Cardiac septum (tissue), 1 donor: ENCODE measurements at regions of chr21 and their contacts with region 1.

Region 1: DNA sequence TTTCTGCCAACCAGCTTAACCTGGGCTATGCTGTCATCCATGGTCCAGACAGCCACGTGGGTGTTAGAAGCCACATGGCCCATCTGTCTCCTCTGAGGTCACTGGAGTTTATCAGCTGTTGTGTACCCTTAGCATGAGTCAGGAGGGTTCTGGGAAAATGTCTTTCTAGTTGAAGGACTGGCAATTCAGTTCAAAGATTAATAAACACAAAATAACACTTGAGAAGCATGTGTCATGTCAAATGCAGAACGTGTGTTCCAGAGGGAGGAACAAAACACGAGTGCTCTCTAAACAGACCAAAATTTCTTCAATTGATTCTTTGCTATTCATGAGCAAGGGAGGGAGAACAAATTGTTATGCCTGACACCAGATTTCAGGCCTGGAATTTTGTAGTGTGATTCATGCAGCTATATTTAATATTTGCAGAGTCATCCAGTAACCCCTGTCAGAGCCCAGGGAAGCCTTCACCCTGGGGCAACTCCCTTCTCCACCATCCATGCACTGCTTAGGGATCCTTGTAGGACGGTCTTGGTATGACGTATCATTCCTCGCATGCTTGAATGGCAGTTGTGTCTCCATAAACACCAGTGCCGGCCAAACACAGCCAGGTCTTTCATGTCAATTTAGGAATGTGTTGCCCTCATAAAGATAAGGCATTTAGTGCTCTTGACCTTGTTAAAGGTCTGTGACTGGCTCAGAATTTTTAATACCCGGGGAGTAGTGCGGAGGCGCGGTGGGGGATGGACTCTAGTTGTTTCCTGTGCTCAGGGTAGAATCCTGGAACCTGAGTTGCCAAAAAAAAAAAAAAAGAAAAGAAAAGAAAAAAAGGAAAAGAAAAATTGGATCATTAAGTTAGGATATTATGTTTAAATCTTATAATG is 27.7 kb upstream of the DYRK1A start:
- DNase-seq: no peak

Region 2: GRCh38 chr21:37557261-37557950 is 218.5 kb after region 1 on chr21:
- intact Hi-C with region 1: loop called (anchors 10 kb)
- DNase-seq: no peak